BJ (cell line): ENCODE measurements at regions of chr10 and their contacts with region 1.

Region 1: DNA sequence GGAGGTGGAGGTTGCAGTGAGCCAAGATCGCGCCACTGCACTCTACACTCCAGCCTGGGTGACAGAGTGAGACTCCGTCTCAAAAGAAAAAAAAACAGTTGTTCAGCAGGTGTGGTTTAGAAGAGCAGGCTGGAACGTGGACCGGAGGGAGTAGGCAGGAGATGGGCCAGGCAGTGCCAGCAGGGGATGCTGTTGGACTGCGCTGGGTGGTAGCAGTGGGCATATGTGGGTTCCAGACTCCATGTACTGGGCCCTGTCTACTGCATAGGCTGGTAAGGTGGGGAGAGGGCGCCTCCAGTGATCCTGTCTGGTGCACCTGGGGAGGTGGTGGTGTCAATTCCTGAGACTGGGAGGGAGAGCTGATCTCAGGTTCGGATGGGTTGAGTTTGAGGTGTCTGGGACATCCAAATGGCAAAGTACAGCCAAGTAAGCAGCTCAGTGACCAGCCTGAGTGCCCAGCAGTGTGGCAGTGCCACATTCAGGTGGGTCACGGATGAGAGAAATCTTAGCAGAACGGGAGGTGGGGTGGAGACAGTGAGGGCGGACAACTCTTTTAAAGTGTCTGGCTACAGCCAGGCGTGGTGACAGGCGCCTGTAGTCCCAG is 25.9 kb downstream of the SFXN4 start:
- DNase-seq: no peak
- H3K4me3 ChIP-seq: no peak overlapping the region
- H3K27me3 ChIP-seq: no peaks in the 10 kb centered on the region
- CTCF ChIP-seq: peak; percentile 72

Region 2: GRCh38 chr10:119120413-119120867 is 19.1 kb before region 1 on chr10:
- CTCF ChIA-PET with region 1: no interaction called
- POLR2A ChIA-PET with region 1: interaction called, 18 read pairs
- DNase-seq: peak; percentile 52
- H3K4me3 ChIP-seq: no peak overlapping the region
- H3K27me3 ChIP-seq: no peaks in the 10 kb centered on the region
- CTCF ChIP-seq: no peak